ENCODE measurements at regions of chr12 and their contacts with region 1.

Region 1: GRCh38 chr12:52050761-52051541 is at the start of gene NR4A1:
- DNase-seq: peak; percentile 92
- H3K4me3 Mint-ChIP-seq: peak within 1 kb of the TSS; percentile 75
- H3K27ac Mint-ChIP-seq: peak within 1 kb of the TSS; percentile 95
- H3K4me1 Mint-ChIP-seq: peaks cover 22% of the 10 kb centered on the region
- H3K27me3 Mint-ChIP-seq: peaks cover 11% of the 10 kb centered on the region
- CTCF ChIP-seq: no peak
- total RNA-seq, gene NR4A1: 0.69 and 2.9 TPM in 2 replicates

Region 2: GRCh38 chr12:52004042-52004648 is 46.8 kb before region 1 on chr12:
- CTCF ChIA-PET with region 1: no interaction called
- POLR2A ChIA-PET with region 1: no interaction called
- intact Hi-C with region 1: no loop called
- DNase-seq: peak; percentile 60
- H3K4me3 Mint-ChIP-seq: no peak overlapping the region
- H3K27ac Mint-ChIP-seq: no peak overlapping the region
- H3K4me1 Mint-ChIP-seq: no peaks in the 10 kb centered on the region
- H3K27me3 Mint-ChIP-seq: peaks cover 20% of the 10 kb centered on the region
- CTCF ChIP-seq: peak; percentile 52

Region 3: DNA sequence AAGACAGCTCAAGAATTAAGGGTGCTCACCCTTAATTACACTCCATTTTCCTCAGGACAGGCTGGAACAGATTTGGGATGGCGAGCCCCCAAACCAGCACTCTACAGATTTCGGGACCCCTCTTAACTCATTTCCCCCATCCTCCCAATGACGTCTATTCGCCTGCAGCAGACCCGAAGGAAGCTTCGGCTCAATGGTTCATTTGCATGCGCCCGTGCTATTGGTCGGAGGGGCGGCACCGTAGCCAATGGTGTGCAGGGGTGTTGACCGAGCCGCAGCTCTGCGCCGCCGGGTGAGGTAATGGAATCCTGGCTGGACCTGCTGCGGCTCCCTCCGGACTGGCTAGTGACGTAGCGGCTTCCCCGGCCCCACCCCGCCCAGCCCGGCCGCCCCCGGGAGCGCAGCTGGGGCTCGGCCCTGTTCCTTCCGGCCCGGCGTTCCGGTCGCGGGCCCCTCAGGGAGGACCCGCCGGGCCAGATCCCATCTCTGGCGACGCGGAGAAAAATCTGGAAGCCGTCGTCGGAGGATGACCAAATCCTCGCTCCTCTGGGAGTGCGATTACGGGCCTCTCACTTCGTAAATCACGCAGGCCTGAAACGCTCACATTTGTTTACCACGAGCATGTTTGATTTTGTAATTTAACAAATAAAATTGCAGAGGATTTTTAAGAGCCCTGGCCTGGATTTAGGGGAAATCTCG is 18.0 kb before region 1 on chr12:
- CTCF ChIA-PET with region 1: interaction called, 16 read pairs
- POLR2A ChIA-PET with region 1: interaction called, 22 read pairs
- intact Hi-C with region 1: no loop called
- DNase-seq: peak; percentile 95
- H3K4me3 Mint-ChIP-seq: peak overlapping the region; percentile 71
- H3K27ac Mint-ChIP-seq: peak overlapping the region; percentile 83
- H3K4me1 Mint-ChIP-seq: peaks cover 10% of the 10 kb centered on the region
- H3K27me3 Mint-ChIP-seq: peaks cover 10% of the 10 kb centered on the region
- CTCF ChIP-seq: no peak

Region 4: DNA sequence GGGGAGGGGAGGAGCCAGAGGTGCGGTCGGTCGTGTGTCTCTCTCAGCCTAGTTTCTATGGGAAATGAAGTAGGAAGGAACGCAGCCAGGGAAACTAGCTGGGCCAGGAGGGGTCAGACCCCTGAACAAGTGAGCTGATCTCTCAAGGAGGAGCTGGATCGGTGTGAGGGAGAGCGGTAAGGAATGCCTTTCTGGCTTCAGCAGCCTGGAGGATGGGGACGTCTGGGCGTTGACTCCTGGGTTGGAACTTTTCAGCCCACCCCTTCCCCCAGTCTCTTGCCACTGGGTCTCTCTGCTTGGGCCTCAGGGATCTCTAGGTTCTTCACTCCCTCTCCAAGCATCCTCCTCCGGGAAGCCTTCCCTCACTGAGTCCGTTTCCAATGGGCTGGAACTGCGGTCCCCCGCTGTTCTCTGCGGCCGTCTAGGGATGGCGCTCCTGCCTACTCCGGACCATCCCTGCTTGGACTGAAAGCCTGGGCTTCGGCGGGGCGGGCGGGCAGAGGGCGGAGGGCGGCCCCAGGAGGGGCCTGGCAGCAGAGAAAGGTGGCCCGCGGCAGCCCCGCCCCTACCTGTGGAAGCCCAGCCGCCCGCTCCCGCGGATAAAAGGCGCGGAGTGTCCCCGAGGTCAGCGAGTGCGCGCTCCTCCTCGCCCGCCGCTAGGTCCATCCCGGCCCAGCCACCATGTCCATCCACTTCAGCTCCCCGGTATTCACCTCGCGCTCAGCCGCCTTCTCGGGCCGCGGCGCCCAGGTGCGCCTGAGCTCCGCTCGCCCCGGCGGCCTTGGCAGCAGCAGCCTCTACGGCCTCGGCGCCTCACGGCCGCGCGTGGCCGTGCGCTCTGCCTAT is 181.9 kb after region 1 on chr12 and contains the start of gene KRT7:
- CTCF ChIA-PET with region 1: no interaction called
- POLR2A ChIA-PET with region 1: no interaction called
- intact Hi-C with region 1: no loop called
- DNase-seq: peak; percentile 92
- H3K4me3 Mint-ChIP-seq: peak within 1 kb of the TSS; percentile 91
- H3K27ac Mint-ChIP-seq: peak within 1 kb of the TSS; percentile 91
- H3K4me1 Mint-ChIP-seq: peaks cover 67% of the 10 kb centered on the region
- H3K27me3 Mint-ChIP-seq: no peaks in the 10 kb centered on the region
- CTCF ChIP-seq: peak; percentile 33
- total RNA-seq, gene KRT7: 2,379 and 3,360 TPM in 2 replicates

Region 5: DNA sequence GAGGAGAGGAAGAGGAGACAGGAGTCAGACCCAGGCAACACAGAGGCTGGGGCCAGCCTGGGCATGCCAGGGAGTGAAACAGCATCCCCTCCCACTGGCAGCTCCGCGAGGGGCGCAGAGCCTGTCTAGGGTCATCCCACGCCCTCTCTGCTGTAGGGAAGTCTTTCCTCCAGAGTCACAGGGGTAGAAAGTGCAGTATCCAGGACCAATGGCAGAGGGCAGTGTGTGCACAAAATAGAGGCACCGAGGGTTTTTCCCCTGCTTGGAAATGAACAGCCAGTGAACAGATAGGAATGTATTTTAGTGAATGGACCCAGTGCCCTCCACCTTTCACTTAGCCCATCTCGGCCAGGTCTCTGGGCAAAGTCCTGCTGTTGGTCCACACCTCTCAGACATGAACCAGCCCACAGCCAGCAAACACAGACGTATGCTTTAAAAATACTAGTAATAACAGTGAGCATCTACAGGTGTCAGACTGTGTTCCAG is 532.1 kb after region 1 on chr12:
- CTCF ChIA-PET with region 1: no interaction called
- POLR2A ChIA-PET with region 1: no interaction called
- intact Hi-C with region 1: no loop called
- DNase-seq: peak; percentile 82
- H3K4me3 Mint-ChIP-seq: no peak overlapping the region
- H3K27ac Mint-ChIP-seq: no peak overlapping the region
- H3K4me1 Mint-ChIP-seq: peaks cover 26% of the 10 kb centered on the region
- H3K27me3 Mint-ChIP-seq: no peaks in the 10 kb centered on the region
- CTCF ChIP-seq: peak; percentile 76

Region 6: GRCh38 chr12:52708010-52708409 is 657.1 kb after region 1 on chr12:
- CTCF ChIA-PET with region 1: no interaction called
- POLR2A ChIA-PET with region 1: no interaction called
- intact Hi-C with region 1: no loop called
- DNase-seq: no peak
- H3K4me3 Mint-ChIP-seq: no peak overlapping the region
- H3K27ac Mint-ChIP-seq: no peak overlapping the region
- H3K4me1 Mint-ChIP-seq: no peaks in the 10 kb centered on the region
- H3K27me3 Mint-ChIP-seq: peaks cover 22% of the 10 kb centered on the region
- CTCF ChIP-seq: no peak